CD8-positive, alpha-beta T cell (primary cell): ENCODE measurements at regions of chr15 and their contacts with region 1.

Region 1: DNA sequence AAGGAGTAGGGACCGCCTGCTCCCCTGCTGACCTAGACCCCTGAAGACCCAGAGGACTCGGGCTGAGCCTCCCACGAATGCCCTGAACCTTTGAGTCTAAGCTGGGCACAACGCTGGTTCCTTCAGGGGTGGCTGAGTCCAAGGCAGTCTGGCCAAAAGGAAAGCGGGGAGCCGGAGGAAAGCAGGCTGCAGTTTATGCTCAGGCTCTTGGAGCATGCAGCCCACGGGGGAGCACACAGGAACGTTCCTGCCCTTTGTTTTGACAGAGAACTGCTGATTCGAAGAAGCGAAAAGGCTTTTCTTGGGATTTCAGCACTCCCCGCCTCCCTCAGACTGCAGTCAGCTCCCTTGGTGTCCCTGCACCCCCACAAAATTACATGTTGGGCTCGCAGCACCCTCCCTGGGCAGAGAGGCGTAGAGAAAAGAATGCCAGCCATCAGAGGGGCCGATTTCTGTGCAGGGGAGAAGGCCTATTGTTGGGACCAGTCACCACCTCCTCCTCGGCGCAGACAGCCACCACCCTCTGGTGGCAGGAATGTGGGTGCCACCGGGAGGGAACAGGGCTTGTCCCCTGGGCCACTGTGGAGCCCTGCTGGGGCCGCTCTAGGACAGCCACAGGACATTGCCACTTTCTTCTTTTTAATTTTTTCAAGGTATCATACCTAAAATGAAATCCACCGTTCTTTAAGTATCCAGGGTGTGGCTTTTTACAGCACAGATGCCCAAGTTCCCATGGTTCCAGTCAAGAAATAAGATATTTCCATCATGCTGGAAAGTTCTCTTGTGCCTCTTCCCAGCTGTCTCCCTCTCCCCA is 72.2 kb downstream of the SMAD6 start:
- DNase-seq: peak; percentile 17 to 68 (median 45)
- ATAC-seq: peak; percentile 66
- H3K4me3 ChIP-seq: no peak overlapping the region
- H3K4me3 Mint-ChIP-seq: no peak overlapping the region
- H3K27ac ChIP-seq: no peak overlapping the region
- H3K27ac Mint-ChIP-seq: no peak overlapping the region
- H3K4me1 ChIP-seq: no peaks in the 10 kb centered on the region
- H3K4me1 Mint-ChIP-seq: no peaks in the 10 kb centered on the region
- H3K27me3 ChIP-seq: no peaks in the 10 kb centered on the region
- H3K27me3 Mint-ChIP-seq: peaks cover 2% of the 10 kb centered on the region
- CTCF ChIP-seq: peak; percentile 63

Region 2: GRCh38 chr15:65304389-65305144 is 1469.6 kb before region 1 on chr15 and contains the start of gene RNU5B-1:
- CTCF ChIA-PET with region 1: no interaction called
- POLR2A ChIA-PET with region 1: no interaction called
- intact Hi-C with region 1: no loop called
- DNase-seq: peak; percentile 41 to 93 (median 72)
- ATAC-seq: peak; percentile 79
- H3K4me3 ChIP-seq: peak within 1 kb of the TSS; percentile 62 to 64
- H3K4me3 Mint-ChIP-seq: peak within 1 kb of the TSS; percentile 94
- H3K27ac ChIP-seq: peak within 1 kb of the TSS; percentile 90 to 98
- H3K27ac Mint-ChIP-seq: peak within 1 kb of the TSS; percentile 98
- H3K4me1 ChIP-seq: peaks cover 10% of the 10 kb centered on the region
- H3K4me1 Mint-ChIP-seq: peaks cover 41% of the 10 kb centered on the region
- H3K27me3 ChIP-seq: no peaks in the 10 kb centered on the region
- H3K27me3 Mint-ChIP-seq: no peaks in the 10 kb centered on the region
- CTCF ChIP-seq: peak; percentile 43
- total RNA-seq, gene RNU5B-1: 17.0 to 36.6 TPM

Region 3: DNA sequence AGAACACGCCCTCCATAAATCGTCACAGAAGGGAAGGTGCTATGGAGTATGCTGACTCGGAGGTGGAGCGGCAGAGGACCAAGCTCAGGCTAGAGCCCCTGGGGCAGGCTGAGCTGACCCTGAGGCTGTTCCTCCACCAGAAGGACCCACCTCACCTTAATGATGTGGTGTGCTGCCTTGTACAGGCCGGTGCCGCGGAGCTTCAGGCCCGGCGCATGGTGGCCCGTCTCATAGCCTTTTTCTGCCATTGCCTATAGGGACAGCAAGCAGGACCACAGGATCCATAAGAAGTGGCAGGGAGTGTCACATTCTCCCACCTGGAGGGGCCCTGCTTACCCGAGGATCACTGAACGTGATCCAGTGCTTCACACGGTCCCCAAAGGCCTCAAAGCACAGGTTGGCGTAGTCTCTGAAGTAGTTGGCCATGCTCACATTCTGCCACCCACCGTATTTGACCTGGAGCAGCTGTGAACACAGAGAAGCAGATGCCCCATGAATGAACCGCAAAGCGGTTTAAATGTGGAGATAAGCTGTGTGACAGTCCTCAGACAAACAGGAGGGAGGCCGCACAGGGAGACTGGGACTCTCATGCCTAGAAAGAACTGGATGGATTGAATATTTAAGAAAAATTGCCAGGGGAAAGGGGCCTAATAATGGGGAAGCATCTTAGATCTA is 213.2 kb before region 1 on chr15:
- CTCF ChIA-PET with region 1: no interaction called
- POLR2A ChIA-PET with region 1: no interaction called
- intact Hi-C with region 1: no loop called
- DNase-seq: no peak
- ATAC-seq: no peak
- H3K4me3 ChIP-seq: no peak overlapping the region
- H3K4me3 Mint-ChIP-seq: no peak overlapping the region
- H3K27ac ChIP-seq: no peak overlapping the region
- H3K27ac Mint-ChIP-seq: no peak overlapping the region
- H3K4me1 ChIP-seq: no peaks in the 10 kb centered on the region
- H3K4me1 Mint-ChIP-seq: no peaks in the 10 kb centered on the region
- H3K27me3 ChIP-seq: no peaks in the 10 kb centered on the region
- H3K27me3 Mint-ChIP-seq: no peaks in the 10 kb centered on the region
- CTCF ChIP-seq: no peak

Region 4: GRCh38 chr15:66603301-66604179 is 170.7 kb before region 1 on chr15:
- CTCF ChIA-PET with region 1: interaction called, 59 read pairs
- POLR2A ChIA-PET with region 1: no interaction called
- intact Hi-C with region 1: loop called in 1 of 2 experiments (anchors 1 kb)
- DNase-seq: peak; percentile 23 to 76 (median 65)
- ATAC-seq: peak; percentile 48
- H3K4me3 ChIP-seq: no peak overlapping the region
- H3K4me3 Mint-ChIP-seq: no peak overlapping the region
- H3K27ac ChIP-seq: no peak overlapping the region
- H3K27ac Mint-ChIP-seq: no peak overlapping the region
- H3K4me1 ChIP-seq: peaks cover under 1% of the 10 kb centered on the region
- H3K4me1 Mint-ChIP-seq: peaks cover 1% of the 10 kb centered on the region
- H3K27me3 ChIP-seq: no peaks in the 10 kb centered on the region
- H3K27me3 Mint-ChIP-seq: peaks cover 5% of the 10 kb centered on the region
- CTCF ChIP-seq: peak; percentile 79

Region 5: GRCh38 chr15:66611257-66612053 is 162.8 kb before region 1 on chr15:
- CTCF ChIA-PET with region 1: interaction called, 98 read pairs
- POLR2A ChIA-PET with region 1: no interaction called
- intact Hi-C with region 1: no loop called
- DNase-seq: no peak
- ATAC-seq: no peak
- H3K4me3 ChIP-seq: no peak overlapping the region
- H3K4me3 Mint-ChIP-seq: no peak overlapping the region
- H3K27ac ChIP-seq: no peak overlapping the region
- H3K27ac Mint-ChIP-seq: no peak overlapping the region
- H3K4me1 ChIP-seq: peaks cover 7% of the 10 kb centered on the region
- H3K4me1 Mint-ChIP-seq: peaks cover 12% of the 10 kb centered on the region
- H3K27me3 ChIP-seq: no peaks in the 10 kb centered on the region
- H3K27me3 Mint-ChIP-seq: no peaks in the 10 kb centered on the region
- CTCF ChIP-seq: no peak

Region 6: GRCh38 chr15:66619151-66619903 is 154.9 kb before region 1 on chr15:
- CTCF ChIA-PET with region 1: interaction called, 98 read pairs
- POLR2A ChIA-PET with region 1: no interaction called
- intact Hi-C with region 1: loop called in 1 of 2 experiments (anchors 1 kb)
- DNase-seq: peak in 6 of 9 experiments; percentile 20 to 57 (median 31)
- ATAC-seq: no peak
- H3K4me3 ChIP-seq: no peak overlapping the region
- H3K4me3 Mint-ChIP-seq: no peak overlapping the region
- H3K27ac ChIP-seq: no peak overlapping the region
- H3K27ac Mint-ChIP-seq: no peak overlapping the region
- H3K4me1 ChIP-seq: no peaks in the 10 kb centered on the region
- H3K4me1 Mint-ChIP-seq: peaks cover 4% of the 10 kb centered on the region
- H3K27me3 ChIP-seq: peaks cover 0 to 5% of the 10 kb centered on the region in 2 experiments
- H3K27me3 Mint-ChIP-seq: peaks cover 14% of the 10 kb centered on the region
- CTCF ChIP-seq: peak; percentile 52

Region 7: DNA sequence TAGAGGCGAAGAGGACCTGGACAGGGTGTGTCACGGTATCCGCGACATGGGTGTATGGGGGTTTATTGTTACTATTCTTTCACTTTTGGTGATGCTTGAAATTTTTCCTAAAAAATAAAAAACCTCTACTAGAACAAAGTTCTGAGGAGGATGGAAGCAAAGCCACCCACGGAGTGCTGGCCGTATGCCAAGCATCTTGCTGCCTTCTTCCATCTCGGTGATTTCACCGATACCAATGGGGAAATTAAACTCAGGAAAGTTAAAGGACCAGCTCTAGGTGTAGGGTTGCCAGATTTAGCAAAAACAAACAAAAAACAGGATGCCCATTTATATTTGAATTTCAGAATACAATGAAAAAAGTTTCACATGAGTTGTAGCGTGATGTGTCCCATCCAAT is 38.3 kb before region 1 on chr15:
- CTCF ChIA-PET with region 1: no interaction called
- POLR2A ChIA-PET with region 1: no interaction called
- intact Hi-C with region 1: no loop called
- DNase-seq: no peak
- ATAC-seq: no peak
- H3K4me3 ChIP-seq: no peak overlapping the region
- H3K4me3 Mint-ChIP-seq: no peak overlapping the region
- H3K27ac ChIP-seq: no peak overlapping the region
- H3K27ac Mint-ChIP-seq: no peak overlapping the region
- H3K4me1 ChIP-seq: no peaks in the 10 kb centered on the region
- H3K4me1 Mint-ChIP-seq: no peaks in the 10 kb centered on the region
- H3K27me3 ChIP-seq: peaks cover 0 to 4% of the 10 kb centered on the region in 2 experiments
- H3K27me3 Mint-ChIP-seq: no peaks in the 10 kb centered on the region
- CTCF ChIP-seq: no peak

Region 8: DNA sequence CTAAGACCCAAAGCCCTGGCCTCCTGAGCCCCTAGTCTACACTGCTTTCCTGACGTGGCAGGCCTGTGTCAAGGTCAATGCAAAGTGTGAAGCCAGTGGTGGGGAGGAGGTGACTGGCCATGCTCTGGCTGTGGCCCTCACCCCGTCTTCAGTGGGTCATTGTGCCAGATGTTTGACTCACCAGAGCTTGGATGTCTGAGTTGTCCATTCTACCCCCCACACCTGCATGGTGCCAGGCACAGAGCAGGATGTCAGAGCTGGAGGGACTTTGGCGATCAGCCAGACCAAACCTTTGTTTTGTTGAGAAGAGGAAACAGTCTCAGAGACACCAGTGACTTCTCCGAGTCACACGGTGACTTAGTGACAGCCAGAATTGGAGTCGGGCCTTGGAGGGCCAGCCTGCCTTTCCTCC is 22.7 kb before region 1 on chr15:
- CTCF ChIA-PET with region 1: interaction called, 11 read pairs
- POLR2A ChIA-PET with region 1: no interaction called
- intact Hi-C with region 1: no loop called
- DNase-seq: peak in 4 of 9 experiments; percentile 12 to 55 (median 36)
- ATAC-seq: peak; percentile 42
- H3K4me3 ChIP-seq: no peak overlapping the region
- H3K4me3 Mint-ChIP-seq: peak overlapping the region; percentile 11
- H3K27ac ChIP-seq: no peak overlapping the region
- H3K27ac Mint-ChIP-seq: peak overlapping the region; percentile 55
- H3K4me1 ChIP-seq: peaks cover 16% of the 10 kb centered on the region
- H3K4me1 Mint-ChIP-seq: peaks cover 12% of the 10 kb centered on the region
- H3K27me3 ChIP-seq: no peaks in the 10 kb centered on the region
- H3K27me3 Mint-ChIP-seq: no peaks in the 10 kb centered on the region
- CTCF ChIP-seq: no peak

Region 9: GRCh38 chr15:66763186-66764066 is 10.8 kb before region 1 on chr15:
- CTCF ChIA-PET with region 1: no interaction called
- POLR2A ChIA-PET with region 1: no interaction called
- intact Hi-C with region 1: no loop called
- DNase-seq: no peak
- ATAC-seq: no peak
- H3K4me3 ChIP-seq: no peak overlapping the region
- H3K4me3 Mint-ChIP-seq: no peak overlapping the region
- H3K27ac ChIP-seq: no peak overlapping the region
- H3K27ac Mint-ChIP-seq: no peak overlapping the region
- H3K4me1 ChIP-seq: no peaks in the 10 kb centered on the region
- H3K4me1 Mint-ChIP-seq: no peaks in the 10 kb centered on the region
- H3K27me3 ChIP-seq: no peaks in the 10 kb centered on the region
- H3K27me3 Mint-ChIP-seq: peaks cover 34% of the 10 kb centered on the region
- CTCF ChIP-seq: no peak